ENCODE measurements at regions of chr7 and their contacts with region 1.

Region 1: GRCh38 chr7:156949541-156950380 is at the start of gene NOM1:
- DNase-seq: peak; percentile 92
- H3K4me3 Mint-ChIP-seq: peak within 1 kb of the TSS; percentile 90
- H3K27ac Mint-ChIP-seq: peak within 1 kb of the TSS; percentile 53
- H3K4me1 Mint-ChIP-seq: peaks cover 37% of the 10 kb centered on the region
- H3K27me3 Mint-ChIP-seq: peaks cover 12% of the 10 kb centered on the region
- total RNA-seq, gene NOM1: 26.0 to 28.3 TPM

Region 2: DNA sequence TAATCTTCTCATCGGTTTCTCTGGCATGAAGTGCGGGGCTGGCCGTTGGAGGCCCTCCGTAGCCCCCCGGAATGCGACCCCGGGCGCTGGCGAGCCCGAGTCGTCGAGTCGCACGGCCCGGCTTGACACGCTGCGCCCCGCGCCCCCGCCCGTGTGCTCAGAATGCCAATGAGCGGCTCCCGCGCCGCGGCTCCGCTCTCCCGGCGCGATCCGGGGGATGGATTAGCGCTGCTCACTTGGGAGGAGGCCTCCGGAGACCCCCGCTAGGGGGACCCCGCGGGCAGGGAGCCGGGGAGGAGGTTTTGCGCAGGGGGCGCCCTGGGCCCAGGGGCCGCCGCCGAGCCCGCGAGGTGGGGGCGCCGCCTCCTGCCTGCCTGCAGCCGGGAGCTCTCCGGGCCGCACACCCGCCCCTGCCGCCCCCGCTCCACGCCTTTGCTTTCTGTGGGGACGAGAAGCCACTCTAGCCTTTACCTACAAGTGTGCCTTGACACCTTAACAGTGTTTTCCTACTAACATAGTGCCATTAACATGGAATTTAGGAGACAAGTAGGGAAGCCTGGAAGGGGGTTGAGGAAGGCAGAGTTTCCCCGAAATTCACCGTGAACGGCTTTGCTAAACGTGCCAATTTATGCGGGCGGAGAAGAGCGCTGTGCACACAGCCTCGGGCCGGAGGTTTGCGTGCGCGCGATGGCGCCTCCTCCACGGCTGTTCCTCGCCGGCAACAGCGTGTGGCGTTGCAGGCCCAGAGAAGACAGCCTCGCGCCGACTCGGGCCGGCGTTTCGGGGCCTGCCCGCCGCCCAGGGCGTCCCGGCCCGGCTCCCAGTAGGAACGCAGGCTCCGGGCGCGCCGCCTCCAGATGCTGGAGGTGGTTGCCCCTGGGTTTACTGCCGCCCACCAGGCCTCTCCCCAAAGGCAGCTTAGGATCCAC is 1144.6 kb before region 1 on chr7:
- CTCF ChIA-PET with region 1: no interaction called
- intact Hi-C with region 1: loop called (anchors 5 kb)
- DNase-seq: peak; percentile 65
- H3K4me3 Mint-ChIP-seq: peak overlapping the region; percentile 17
- H3K27ac Mint-ChIP-seq: no peak overlapping the region
- H3K4me1 Mint-ChIP-seq: peaks cover 25% of the 10 kb centered on the region
- H3K27me3 Mint-ChIP-seq: peaks cover 54% of the 10 kb centered on the region

Region 3: DNA sequence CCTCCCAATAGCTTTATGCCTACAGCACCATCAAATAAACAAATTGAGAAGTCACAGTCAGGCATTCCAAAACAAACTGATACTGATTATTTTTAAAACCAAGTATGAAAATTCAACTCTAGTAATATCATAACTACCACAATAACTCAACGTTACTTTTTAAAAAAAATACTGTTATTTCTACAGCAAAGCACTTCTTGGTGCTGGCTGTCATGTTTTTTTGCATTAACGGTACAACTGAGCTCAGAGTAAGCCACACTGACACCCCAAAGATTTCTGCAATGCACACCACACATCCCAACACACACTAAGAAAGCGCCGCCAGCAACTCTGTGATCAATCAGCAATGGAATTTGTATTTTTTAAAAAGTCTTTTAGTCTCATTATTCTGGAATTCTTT is 195.6 kb before region 1 on chr7:
- CTCF ChIA-PET with region 1: no interaction called
- intact Hi-C with region 1: no loop called
- DNase-seq: no peak
- H3K4me3 Mint-ChIP-seq: no peak overlapping the region
- H3K27ac Mint-ChIP-seq: no peak overlapping the region
- H3K4me1 Mint-ChIP-seq: no peaks in the 10 kb centered on the region
- H3K27me3 Mint-ChIP-seq: no peaks in the 10 kb centered on the region

Region 4: DNA sequence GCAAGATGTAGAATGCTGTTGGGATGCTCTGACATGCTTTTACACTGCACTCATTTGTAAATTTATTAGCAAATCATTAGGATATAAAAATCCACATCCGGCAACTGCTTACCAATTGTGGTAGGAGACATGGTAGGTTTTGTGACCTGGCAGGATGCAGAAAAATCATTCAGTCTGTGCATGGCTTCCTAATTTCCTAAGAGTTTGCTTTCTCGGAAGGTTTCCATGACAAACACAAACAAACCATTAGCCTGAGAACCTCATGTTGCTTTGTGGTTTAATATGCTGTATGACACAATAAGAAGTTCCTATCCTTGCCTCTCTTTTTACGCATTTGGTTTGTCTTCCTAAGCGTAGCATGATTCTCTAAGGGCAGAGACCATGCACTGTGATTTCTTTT is 42.1 kb before region 1 on chr7:
- CTCF ChIA-PET with region 1: interaction called, 3 read pairs
- intact Hi-C with region 1: loop called (anchors 1 kb)
- DNase-seq: no peak
- H3K4me3 Mint-ChIP-seq: no peak overlapping the region
- H3K27ac Mint-ChIP-seq: no peak overlapping the region
- H3K4me1 Mint-ChIP-seq: peaks cover 12% of the 10 kb centered on the region
- H3K27me3 Mint-ChIP-seq: peaks cover 7% of the 10 kb centered on the region

Region 5: GRCh38 chr7:156927571-156928405 is 22.0 kb before region 1 on chr7:
- CTCF ChIA-PET with region 1: no interaction called
- intact Hi-C with region 1: loop called (anchors 1 kb)
- DNase-seq: no peak
- H3K4me3 Mint-ChIP-seq: no peak overlapping the region
- H3K27ac Mint-ChIP-seq: no peak overlapping the region
- H3K4me1 Mint-ChIP-seq: peaks cover 19% of the 10 kb centered on the region
- H3K27me3 Mint-ChIP-seq: no peaks in the 10 kb centered on the region

Region 6: DNA sequence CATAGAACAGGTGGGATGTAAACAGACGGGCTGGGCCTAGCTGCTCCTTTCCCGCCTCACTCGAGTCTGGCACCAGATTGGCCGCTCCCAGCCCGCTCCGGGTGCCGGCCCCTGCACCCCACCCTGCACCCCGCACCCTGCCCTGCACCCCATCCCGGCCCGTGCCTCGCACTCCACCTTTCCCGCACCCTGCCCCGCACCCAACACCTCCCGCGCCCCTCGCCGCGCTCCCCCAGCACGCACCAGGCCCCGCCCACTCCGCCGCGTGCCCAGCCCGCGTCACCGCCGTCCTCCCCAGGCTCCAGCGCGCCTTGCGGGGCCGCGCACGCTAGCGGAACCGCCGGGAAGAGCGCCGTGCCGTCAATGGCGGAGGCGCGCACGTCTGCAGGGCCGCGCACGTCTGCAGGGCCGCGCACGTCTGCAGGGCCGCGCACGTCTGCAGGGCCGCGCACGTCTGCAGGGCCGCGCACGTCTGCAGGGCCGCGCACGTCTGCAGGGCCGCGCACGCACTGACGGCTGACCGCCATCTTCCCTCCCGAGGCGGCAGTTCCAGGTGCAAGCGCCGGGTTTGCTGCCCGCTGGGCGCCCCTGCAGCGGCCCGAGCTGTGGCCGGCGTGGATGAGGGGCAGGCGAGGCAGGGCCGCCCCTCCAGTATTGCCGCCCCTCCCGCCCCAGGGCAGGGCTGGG is 188.8 kb after region 1 on chr7 and contains the start of gene UBE3C:
- CTCF ChIA-PET with region 1: interaction called, 6 read pairs
- intact Hi-C with region 1: loop called (anchors 1 kb)
- DNase-seq: peak; percentile 87
- H3K4me3 Mint-ChIP-seq: peak within 1 kb of the TSS; percentile 84
- H3K27ac Mint-ChIP-seq: peak within 1 kb of the TSS; percentile 92
- H3K4me1 Mint-ChIP-seq: peaks cover 38% of the 10 kb centered on the region
- H3K27me3 Mint-ChIP-seq: no peaks in the 10 kb centered on the region
- total RNA-seq, gene UBE3C: 52.9 to 55.7 TPM